Pancreas (tissue), 10 donors: ENCODE measurements at regions of chr3 and their contacts with region 1.

Region 1: DNA sequence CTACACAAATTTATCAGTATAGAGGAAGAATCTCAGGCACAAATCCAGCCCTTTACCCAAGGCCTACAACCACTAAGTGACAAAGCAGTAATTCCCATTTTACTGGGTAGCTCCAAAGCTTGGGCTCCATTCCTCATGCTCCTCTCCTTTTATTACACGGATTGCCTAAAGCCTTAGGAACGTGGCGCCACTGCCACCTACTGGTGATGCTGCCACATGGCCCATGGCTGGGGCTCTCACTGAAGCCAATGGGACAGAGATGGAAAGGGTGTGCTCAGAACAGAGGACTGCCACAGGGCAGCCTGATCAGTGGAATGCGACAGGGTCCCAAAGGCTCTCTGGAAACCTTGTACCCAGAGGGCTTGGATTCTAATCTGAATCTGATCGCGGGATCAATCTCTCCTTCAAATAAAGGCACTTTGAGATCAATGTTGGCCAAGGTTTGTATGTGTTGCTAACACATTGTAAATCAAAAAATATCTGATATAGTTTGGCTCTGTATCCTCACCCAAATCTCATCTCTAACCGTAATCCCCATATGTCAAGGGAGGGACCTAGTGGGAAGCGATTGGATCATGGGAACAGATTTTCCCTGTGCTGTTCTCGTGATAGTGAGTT is 33.5 kb upstream of the LYZL4 start:
- DNase-seq: peak; percentile 59 to 94 (median 84)
- ATAC-seq: peak; percentile 95 to 100 (median 100)
- H3K4me3 ChIP-seq: no peak overlapping the region
- H3K27ac ChIP-seq: no peak overlapping the region
- H3K4me1 ChIP-seq: no peaks in the 10 kb centered on the region
- H3K27me3 ChIP-seq: no peaks in the 10 kb centered on the region
- CTCF ChIP-seq: peak; percentile 90 to 97 (median 94)

Region 2: DNA sequence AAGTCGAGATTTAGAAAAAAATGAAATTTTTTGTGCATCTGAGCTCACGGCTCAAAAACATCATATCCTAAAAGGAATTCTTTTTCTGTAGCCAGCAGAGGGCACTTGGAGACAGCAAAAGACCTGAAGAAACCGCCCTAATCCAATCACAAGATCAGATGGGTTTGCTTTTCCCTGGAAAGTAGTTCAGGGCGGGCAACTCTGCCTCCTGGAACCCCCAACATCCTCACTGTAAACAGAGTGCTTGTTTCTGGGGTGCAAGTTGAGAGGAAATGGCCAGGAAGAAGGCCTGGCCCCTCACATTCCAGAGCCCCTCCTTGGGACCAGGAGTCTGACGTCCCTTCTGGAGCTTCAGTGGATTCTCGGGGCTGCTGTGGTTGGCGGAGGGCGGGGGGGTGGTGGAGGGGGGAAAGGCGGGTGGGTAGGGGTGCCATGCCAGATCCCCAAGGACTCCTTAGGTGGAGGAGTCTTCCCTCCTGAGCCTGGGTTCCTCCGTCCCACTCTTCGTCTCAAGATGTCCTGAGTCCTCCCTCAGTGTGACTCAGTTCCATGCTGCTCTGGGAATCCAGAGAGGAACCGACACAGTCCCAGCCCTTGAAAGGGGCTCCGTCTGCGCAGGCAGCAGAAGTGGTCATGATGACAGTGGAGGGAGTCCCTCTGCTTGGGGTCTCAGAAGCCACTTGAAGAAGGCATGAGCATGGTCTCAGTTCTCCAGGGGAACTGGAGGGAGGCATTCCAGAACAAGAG is 213.8 kb before region 1 on chr3:
- intact Hi-C with region 1: loop called in 2 of 3 experiments (anchors 5 to 10 kb)
- DNase-seq: no peak
- ATAC-seq: peak in 3 of 4 donors; percentile 65 to 79 (median 78)
- H3K4me3 ChIP-seq: no peak overlapping the region
- H3K27ac ChIP-seq: no peak overlapping the region
- H3K4me1 ChIP-seq: no peaks in the 10 kb centered on the region
- H3K27me3 ChIP-seq: no peaks in the 10 kb centered on the region
- CTCF ChIP-seq: peak in 2 of 4 donors; percentile 15 to 33

Region 3: GRCh38 chr3:42247576-42248027 is 196.3 kb before region 1 on chr3:
- intact Hi-C with region 1: loop called in 2 of 3 experiments (anchors 5 to 10 kb)
- DNase-seq: peak in 5 of 6 donors; percentile 41 to 72 (median 47)
- ATAC-seq: peak; percentile 69 to 97 (median 94)
- H3K4me3 ChIP-seq: no peak overlapping the region
- H3K27ac ChIP-seq: no peak overlapping the region
- H3K4me1 ChIP-seq: peaks cover 0 to 4% (median 0%) of the 10 kb centered on the region in 3 donors
- H3K27me3 ChIP-seq: no peaks in the 10 kb centered on the region
- CTCF ChIP-seq: peak; percentile 60 to 72 (median 69)

Region 4: GRCh38 chr3:42256135-42256819 is 187.7 kb before region 1 on chr3:
- intact Hi-C with region 1: loop called in 1 of 3 experiments (anchors 10 kb)
- DNase-seq: no peak
- ATAC-seq: peak in 1 of 4 donors; percentile 29
- H3K4me3 ChIP-seq: no peak overlapping the region
- H3K27ac ChIP-seq: no peak overlapping the region
- H3K4me1 ChIP-seq: no peaks in the 10 kb centered on the region
- H3K27me3 ChIP-seq: peaks cover 0 to 7% (median 0%) of the 10 kb centered on the region in 4 donors
- CTCF ChIP-seq: no peak